CD8-positive, alpha-beta T cell (primary cell): ENCODE measurements at regions of chr2 and their contacts with region 1.

Region 1: DNA sequence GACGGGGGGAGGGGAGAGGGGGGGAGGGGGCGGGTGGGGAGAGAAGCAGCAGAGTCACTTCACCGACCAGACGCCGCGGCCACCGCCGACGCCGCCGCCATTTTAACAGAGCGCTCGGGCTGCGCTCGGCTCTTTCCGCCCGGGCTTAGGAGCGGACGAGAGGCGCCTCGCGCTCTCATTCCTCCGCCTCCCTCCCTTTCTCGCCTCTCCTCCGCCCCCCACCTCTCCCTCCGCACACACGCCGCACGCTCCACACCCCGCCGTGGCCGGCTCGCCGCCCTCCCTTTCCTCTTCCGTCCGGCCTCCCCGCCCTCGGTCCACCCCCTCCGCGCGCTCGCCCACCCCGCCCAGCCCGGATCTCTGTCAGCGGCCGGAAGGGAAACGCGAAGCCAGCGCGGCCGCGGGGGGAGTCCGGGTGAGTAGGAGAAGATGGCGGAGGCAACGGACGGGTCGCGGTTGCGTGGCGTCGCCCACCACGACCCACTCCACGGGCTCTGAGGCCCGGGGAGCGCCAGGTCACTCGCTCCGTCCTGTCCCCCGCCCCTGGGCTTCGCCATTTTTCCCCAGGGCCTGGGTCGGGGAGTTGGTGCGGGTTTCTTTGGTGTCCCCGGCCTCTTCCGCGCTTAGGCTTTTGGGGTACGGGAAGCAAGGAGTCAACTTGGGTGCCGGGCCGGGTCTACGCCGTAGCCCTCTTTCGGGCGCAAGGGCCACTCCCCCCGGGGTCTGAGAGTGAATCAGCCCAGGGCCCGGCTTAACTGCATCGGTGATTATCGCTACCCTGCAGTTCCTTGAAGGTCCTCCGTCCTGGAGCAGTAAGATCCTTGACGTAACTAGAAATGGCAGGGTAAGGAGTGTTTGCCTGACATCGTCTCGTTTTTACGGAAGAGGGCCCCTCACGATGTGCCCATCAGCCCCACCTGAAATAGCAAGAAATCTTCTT is at the start of gene USP34:
- DNase-seq: peak; percentile 90 to 98 (median 93)
- ATAC-seq: peak; percentile 85
- H3K4me3 ChIP-seq: peak within 1 kb of the TSS; percentile 77 to 99
- H3K4me3 Mint-ChIP-seq: peak within 1 kb of the TSS; percentile 92
- H3K27ac ChIP-seq: peak within 1 kb of the TSS; percentile 89 to 100
- H3K27ac Mint-ChIP-seq: peak within 1 kb of the TSS; percentile 98
- H3K4me1 ChIP-seq: peaks cover 35% of the 10 kb centered on the region
- H3K4me1 Mint-ChIP-seq: peaks cover 34% of the 10 kb centered on the region
- H3K27me3 ChIP-seq: no peaks in the 10 kb centered on the region
- H3K27me3 Mint-ChIP-seq: no peaks in the 10 kb centered on the region
- CTCF ChIP-seq: no peak
- total RNA-seq, gene USP34: 99.6 to 103 TPM

Region 2: GRCh38 chr2:61065715-61066709 is 405.2 kb before region 1 on chr2 and contains the start of gene SANBR:
- CTCF ChIA-PET with region 1: no interaction called
- POLR2A ChIA-PET with region 1: no interaction called
- intact Hi-C with region 1: loop called in 1 of 2 experiments (anchors 5 kb)
- DNase-seq: peak; percentile 65 to 92 (median 79)
- ATAC-seq: peak; percentile 97
- H3K4me3 ChIP-seq: peak within 1 kb of the TSS; percentile 50 to 59
- H3K4me3 Mint-ChIP-seq: peak within 1 kb of the TSS; percentile 94
- H3K27ac ChIP-seq: no peak within 1 kb of the TSS
- H3K27ac Mint-ChIP-seq: peak within 1 kb of the TSS; percentile 82
- H3K4me1 ChIP-seq: peaks cover 4% of the 10 kb centered on the region
- H3K4me1 Mint-ChIP-seq: peaks cover 7% of the 10 kb centered on the region
- H3K27me3 ChIP-seq: no peaks in the 10 kb centered on the region
- H3K27me3 Mint-ChIP-seq: no peaks in the 10 kb centered on the region
- CTCF ChIP-seq: no peak
- total RNA-seq, gene SANBR: 0.52 to 0.67 TPM

Region 3: GRCh38 chr2:61694312-61695274 is 223.4 kb after region 1 on chr2:
- CTCF ChIA-PET with region 1: no interaction called
- POLR2A ChIA-PET with region 1: no interaction called
- intact Hi-C with region 1: loop called (anchors 1 to 2 kb)
- DNase-seq: peak; percentile 65 to 89 (median 82)
- ATAC-seq: peak; percentile 95
- H3K4me3 ChIP-seq: peak overlapping the region; percentile 88 to 93
- H3K4me3 Mint-ChIP-seq: peak overlapping the region; percentile 90
- H3K27ac ChIP-seq: peak overlapping the region; percentile 43 to 63
- H3K27ac Mint-ChIP-seq: peak overlapping the region; percentile 87
- H3K4me1 ChIP-seq: peaks cover 14% of the 10 kb centered on the region
- H3K4me1 Mint-ChIP-seq: peaks cover 16% of the 10 kb centered on the region
- H3K27me3 ChIP-seq: no peaks in the 10 kb centered on the region
- H3K27me3 Mint-ChIP-seq: no peaks in the 10 kb centered on the region
- CTCF ChIP-seq: peak; percentile 52

Region 4: GRCh38 chr2:61764035-61764800 is 293.0 kb after region 1 on chr2:
- CTCF ChIA-PET with region 1: no interaction called
- POLR2A ChIA-PET with region 1: no interaction called
- intact Hi-C with region 1: loop called (anchors 1 to 5 kb)
- DNase-seq: peak; percentile 91 to 99 (median 94)
- ATAC-seq: peak; percentile 97
- H3K4me3 ChIP-seq: peak overlapping the region; percentile 90 to 91
- H3K4me3 Mint-ChIP-seq: peak overlapping the region; percentile 96
- H3K27ac ChIP-seq: peak overlapping the region; percentile 99 to 100
- H3K27ac Mint-ChIP-seq: peak overlapping the region; percentile 98
- H3K4me1 ChIP-seq: no peaks in the 10 kb centered on the region
- H3K4me1 Mint-ChIP-seq: peaks cover 12% of the 10 kb centered on the region
- H3K27me3 ChIP-seq: no peaks in the 10 kb centered on the region
- H3K27me3 Mint-ChIP-seq: no peaks in the 10 kb centered on the region
- CTCF ChIP-seq: no peak

Region 5: GRCh38 chr2:61854474-61855182 is 383.4 kb after region 1 on chr2:
- CTCF ChIA-PET with region 1: no interaction called
- POLR2A ChIA-PET with region 1: no interaction called
- intact Hi-C with region 1: loop called (anchors 1 to 10 kb)
- DNase-seq: peak; percentile 80 to 98 (median 87)
- ATAC-seq: peak; percentile 89
- H3K4me3 ChIP-seq: peak overlapping the region; percentile 79 to 88
- H3K4me3 Mint-ChIP-seq: peak overlapping the region; percentile 97
- H3K27ac ChIP-seq: peak overlapping the region; percentile 64 to 81
- H3K27ac Mint-ChIP-seq: peak overlapping the region; percentile 96
- H3K4me1 ChIP-seq: peaks cover 12% of the 10 kb centered on the region
- H3K4me1 Mint-ChIP-seq: peaks cover 15% of the 10 kb centered on the region
- H3K27me3 ChIP-seq: no peaks in the 10 kb centered on the region
- H3K27me3 Mint-ChIP-seq: no peaks in the 10 kb centered on the region
- CTCF ChIP-seq: no peak

Region 6: GRCh38 chr2:61878756-61879155 is 407.5 kb after region 1 on chr2:
- CTCF ChIA-PET with region 1: no interaction called
- POLR2A ChIA-PET with region 1: no interaction called
- intact Hi-C with region 1: no loop called
- DNase-seq: no peak
- ATAC-seq: no peak
- H3K4me3 ChIP-seq: no peak overlapping the region
- H3K4me3 Mint-ChIP-seq: no peak overlapping the region
- H3K27ac ChIP-seq: no peak overlapping the region
- H3K27ac Mint-ChIP-seq: no peak overlapping the region
- H3K4me1 ChIP-seq: no peaks in the 10 kb centered on the region
- H3K4me1 Mint-ChIP-seq: no peaks in the 10 kb centered on the region
- H3K27me3 ChIP-seq: no peaks in the 10 kb centered on the region
- H3K27me3 Mint-ChIP-seq: no peaks in the 10 kb centered on the region
- CTCF ChIP-seq: no peak